ENCODE measurements at regions of chr1 and their contacts with region 1.

Region 1: DNA sequence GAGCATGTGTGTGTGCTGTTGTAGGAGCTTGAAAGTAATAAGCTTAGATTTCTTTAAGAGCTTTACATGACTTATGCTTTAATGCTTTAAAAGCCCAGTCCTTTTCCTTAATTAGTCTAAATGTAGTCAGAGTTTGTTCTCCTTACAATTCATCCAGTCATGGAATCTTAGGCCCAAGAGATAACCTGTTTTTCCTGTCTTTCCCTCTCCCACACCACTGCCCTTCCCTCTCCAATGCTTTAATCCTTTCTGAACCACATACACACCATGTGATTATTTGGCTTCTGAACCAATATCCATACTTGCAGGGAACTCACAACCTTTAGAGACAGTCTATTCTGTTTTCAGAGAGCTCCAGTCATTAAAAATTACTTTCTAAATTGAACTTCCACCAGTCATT is 37.6 kb downstream of the ALG6 start:
- DNase-seq: peak; percentile 15 to 61
- H3K4me3 ChIP-seq: no peak overlapping the region
- H3K27ac ChIP-seq: no peak overlapping the region
- H3K4me1 ChIP-seq: peaks cover 13% of the 10 kb centered on the region
- H3K27me3 ChIP-seq: no peaks in the 10 kb centered on the region
- CTCF ChIP-seq: no peak

Region 2: GRCh38 chr1:63148825-63149645 is 256.0 kb before region 1 on chr1:
- CTCF ChIA-PET with region 1: no interaction called
- POLR2A ChIA-PET with region 1: interaction called, 22 read pairs
- intact Hi-C with region 1: no loop called
- DNase-seq: peak in 1 of 2 experiments; percentile 3
- H3K4me3 ChIP-seq: no peak overlapping the region
- H3K27ac ChIP-seq: no peak overlapping the region
- H3K4me1 ChIP-seq: no peaks in the 10 kb centered on the region
- H3K27me3 ChIP-seq: 0 out of 2 replicates have a peak, but pooled peaks cover 9% of the 10 kb centered on the region
- CTCF ChIP-seq: peak; percentile 65

Measured in PC-9 (cell line).